ENCODE measurements at regions of chr9 and their contacts with region 1.

Region 1: GRCh38 chr9:26892251-26893029 is at the start of gene CAAP1:
- DNase-seq: peak; percentile 97
- ATAC-seq: peak; percentile 100
- total RNA-seq, gene CAAP1: 5.0 TPM

Region 2: DNA sequence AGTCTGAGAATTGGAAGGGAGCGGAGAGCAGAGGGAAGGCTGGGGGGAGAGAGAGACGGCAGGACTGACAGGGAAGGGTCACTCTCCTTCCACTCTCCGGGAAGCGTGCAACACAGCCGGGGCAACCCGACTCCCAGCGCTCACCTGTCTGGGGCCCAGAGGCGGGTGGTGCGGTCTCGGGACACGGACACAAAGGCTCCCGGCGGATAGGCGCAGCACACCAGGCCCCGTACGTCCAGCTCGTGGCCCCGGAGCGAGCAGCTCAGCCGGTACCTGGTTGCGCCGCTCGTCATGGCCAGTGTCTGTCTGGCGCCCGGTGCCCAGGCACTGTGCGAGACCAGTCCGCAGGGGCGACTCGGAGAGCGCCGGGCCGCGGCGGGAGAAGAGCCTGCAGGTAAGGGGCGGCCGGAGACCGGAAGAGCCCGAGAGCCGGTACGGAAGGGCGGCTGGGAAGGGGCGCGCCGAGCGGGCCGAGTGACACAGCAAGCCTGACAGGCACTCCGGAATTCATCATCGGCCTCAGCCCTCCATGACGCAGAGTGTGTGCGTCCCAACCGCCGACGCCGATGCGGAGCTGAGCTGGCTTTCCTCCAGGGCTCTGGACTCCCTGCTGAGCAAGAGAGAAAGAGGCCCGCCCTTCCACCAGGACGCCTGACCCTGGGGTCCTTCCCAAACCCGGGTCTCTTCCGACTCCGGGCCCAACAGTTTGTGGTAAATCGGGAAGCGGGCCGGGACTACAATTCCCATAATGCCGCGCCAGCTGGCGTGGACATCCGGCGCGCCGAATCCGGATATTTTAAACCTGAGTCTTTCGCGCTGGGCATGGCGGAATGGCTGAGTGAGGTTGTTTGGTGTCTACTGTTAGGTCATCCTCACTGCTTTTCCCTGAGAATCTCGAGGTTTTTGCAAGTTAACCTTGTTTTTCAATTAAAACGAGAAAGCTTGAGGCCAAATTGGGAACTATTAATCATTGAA is 54.6 kb after region 1 on chr9 and contains the start of gene PLAA:
- intact Hi-C with region 1: loop called (anchors 5 kb)
- DNase-seq: peak; percentile 93
- ATAC-seq: peak; percentile 100
- total RNA-seq, gene PLAA: 28.5 TPM

Region 3: DNA sequence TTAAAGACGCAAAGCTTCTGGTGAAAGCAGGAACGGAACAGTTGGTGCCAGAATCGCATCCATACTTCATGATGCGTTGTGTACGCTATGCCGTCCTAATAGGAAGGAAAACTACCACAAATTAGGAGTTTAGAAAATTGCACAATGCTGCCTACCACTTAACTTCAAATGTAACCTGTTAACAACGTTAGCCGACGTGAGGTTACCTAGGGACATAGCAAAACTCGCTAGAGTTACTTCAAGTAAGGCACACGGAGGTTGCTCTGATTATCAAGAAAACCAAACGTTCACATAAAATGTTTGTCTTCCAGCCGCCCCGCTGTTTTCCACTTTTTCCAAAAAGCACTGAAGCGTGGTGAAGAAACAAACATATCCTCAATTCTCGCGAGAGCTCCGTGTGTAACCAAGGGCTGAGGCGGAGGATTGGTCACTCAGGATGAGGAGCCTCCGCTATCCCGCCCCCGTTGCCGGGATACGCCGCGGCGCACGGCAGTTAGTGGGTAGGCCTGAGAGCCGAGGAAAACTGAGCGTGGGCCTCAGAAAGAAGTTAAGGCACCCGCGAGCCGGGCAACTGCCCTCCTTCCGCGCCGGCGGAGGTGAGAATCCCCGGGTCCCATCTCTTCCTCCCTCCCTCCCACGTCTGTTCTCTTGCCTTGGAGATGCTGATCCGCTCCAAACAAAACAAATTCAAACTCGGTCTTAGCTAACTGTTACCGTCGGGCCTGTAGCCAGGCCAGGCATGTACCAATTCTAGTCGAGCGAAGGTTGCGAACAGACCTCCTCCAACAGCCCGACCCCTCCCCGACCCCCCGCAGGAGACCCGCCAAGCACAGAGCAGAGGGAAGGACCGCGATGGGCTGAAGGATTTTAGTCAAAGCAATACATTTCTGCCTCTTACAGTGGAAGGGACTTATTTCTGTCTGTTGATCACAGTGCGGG is 63.8 kb after region 1 on chr9 and contains the start of gene IFT74:
- intact Hi-C with region 1: loop called (anchors 2 kb)
- DNase-seq: peak; percentile 99
- ATAC-seq: peak; percentile 100
- total RNA-seq, gene IFT74: 10.6 TPM

Measured in Right ventricle myocardium superior (tissue), 1 donor.